MCF 10A (cell line): ENCODE measurements at regions of chr11 and their contacts with region 1.

Region 1: DNA sequence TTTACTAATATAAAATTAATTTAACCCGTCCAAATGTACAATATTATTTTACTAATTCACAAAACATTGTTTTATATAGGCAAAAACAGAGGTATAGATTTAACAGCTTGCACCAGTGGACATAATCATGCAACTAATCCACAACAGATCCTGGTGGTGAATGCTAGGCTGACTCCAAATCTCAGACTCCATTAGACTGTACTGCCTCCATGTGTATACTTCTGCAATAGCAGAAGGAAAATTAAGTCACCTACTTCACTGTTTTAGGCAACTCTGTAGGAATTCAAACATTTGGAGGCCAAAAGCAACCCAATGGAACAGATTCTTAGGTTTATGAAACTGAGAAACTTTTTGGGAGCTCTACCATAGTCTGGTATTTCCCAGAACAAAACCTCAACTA is 30.0 kb upstream of the RAB39A start:
- DNase-seq: peak; percentile 60
- H3K4me3 Mint-ChIP-seq: no peak overlapping the region
- H3K27ac Mint-ChIP-seq: no peak overlapping the region
- H3K4me1 Mint-ChIP-seq: peaks cover 3% of the 10 kb centered on the region
- H3K27me3 Mint-ChIP-seq: peaks cover 22% of the 10 kb centered on the region
- CTCF ChIP-seq: peak; percentile 69

Region 2: DNA sequence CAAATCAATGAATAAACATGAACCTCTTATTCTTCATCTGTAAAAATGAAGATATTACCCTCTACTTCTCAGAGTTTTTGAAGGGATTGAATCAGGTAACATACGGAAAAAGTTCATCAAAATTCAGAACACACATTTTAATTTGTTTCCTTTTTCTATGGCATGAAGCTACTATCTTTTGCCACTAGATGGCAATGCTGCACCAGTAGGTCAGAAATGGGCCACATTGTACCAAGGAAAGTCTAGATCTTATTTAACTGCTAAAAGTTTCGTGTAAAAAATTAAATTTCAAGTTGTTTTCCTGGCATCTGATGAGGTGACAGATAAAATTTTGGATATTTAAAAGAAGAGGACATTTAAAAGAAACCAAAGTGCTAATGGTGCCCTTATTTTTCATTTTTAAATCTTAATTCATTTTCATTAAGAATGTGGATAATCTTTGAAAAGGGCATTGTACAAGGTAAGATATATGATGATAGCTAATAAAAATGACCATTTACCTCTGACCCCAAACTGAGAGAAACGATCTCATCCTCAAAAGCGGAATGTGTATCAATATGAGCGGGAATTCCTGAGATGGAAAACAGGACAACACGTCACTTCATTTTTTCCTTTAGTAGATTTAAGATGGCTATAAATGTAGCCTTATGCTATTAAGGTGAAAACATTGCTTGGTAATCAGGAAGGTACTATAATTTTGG is 348.9 kb before region 1 on chr11:
- CTCF ChIA-PET with region 1: no interaction called
- POLR2A ChIA-PET with region 1: no interaction called
- intact Hi-C with region 1: loop called (anchors 5 kb)
- DNase-seq: peak; percentile 63
- H3K4me3 Mint-ChIP-seq: no peak overlapping the region
- H3K27ac Mint-ChIP-seq: no peak overlapping the region
- H3K4me1 Mint-ChIP-seq: peaks cover 13% of the 10 kb centered on the region
- H3K27me3 Mint-ChIP-seq: no peaks in the 10 kb centered on the region
- CTCF ChIP-seq: peak; percentile 67

Region 3: DNA sequence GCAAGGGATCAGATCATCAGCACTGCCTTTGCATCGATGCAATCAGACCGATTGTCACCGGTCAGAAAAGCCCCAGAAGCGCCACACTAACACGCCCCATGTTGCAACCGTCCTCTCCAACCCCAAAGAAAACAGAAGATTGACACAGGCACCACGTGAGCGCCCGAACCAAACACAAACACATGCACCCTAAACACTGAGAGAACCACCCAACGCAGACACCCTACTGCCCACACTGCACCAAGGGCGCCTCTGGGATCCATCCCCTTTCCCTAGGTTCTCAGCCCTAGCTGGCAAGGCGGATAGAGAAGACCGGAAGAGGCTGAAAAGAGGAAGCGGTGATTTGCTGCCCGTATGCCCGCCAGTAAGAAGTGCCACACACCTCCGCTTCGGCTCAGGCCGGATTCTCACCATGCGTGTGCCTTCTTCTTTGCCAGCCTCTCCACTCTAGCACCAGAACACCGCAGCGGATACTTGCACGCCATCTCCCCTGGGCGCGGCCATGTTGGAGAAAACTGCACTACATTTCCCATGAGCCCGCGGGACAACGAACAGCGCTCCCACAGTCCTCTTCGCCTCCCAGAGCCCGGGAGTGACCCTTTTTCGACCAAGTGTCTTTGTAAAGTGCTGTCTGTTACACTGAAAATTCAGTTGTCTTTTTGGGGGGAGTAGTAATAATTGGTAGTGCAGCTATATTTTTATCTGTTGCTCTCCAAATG is 332.9 kb before region 1 on chr11 and contains the start of gene ALKBH8:
- CTCF ChIA-PET with region 1: interaction called, 6 read pairs
- POLR2A ChIA-PET with region 1: no interaction called
- intact Hi-C with region 1: loop called (anchors 5 kb)
- DNase-seq: peak; percentile 72
- H3K4me3 Mint-ChIP-seq: peak within 1 kb of the TSS; percentile 83
- H3K27ac Mint-ChIP-seq: peak within 1 kb of the TSS; percentile 82
- H3K4me1 Mint-ChIP-seq: peaks cover 23% of the 10 kb centered on the region
- H3K27me3 Mint-ChIP-seq: no peaks in the 10 kb centered on the region
- CTCF ChIP-seq: no peak
- total RNA-seq, gene ALKBH8: 5.1 and 7.3 TPM in 2 replicates

Region 4: DNA sequence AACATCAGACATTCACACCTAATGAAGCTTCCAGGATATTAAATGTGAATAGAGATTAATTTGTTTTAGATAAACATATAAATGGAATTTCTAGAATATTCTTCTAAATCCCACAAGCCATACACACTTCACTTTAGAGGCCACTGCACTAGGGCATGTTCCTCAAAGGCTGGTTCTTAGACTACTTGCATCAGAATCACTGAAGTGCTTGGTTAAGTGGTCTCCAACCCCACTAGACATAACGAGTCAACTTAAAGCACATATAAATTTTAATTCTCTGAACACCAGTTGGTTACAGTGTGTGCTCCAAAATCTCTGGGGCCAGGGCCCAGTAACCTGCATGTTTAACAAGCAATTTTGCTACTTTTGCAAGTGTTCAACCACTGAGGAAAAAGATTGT is 324.8 kb before region 1 on chr11:
- CTCF ChIA-PET with region 1: interaction called, 4 read pairs
- POLR2A ChIA-PET with region 1: no interaction called
- intact Hi-C with region 1: loop called (anchors 5 kb)
- DNase-seq: no peak
- H3K4me3 Mint-ChIP-seq: no peak overlapping the region
- H3K27ac Mint-ChIP-seq: no peak overlapping the region
- H3K4me1 Mint-ChIP-seq: no peaks in the 10 kb centered on the region
- H3K27me3 Mint-ChIP-seq: peaks cover 15% of the 10 kb centered on the region
- CTCF ChIP-seq: no peak

Region 5: DNA sequence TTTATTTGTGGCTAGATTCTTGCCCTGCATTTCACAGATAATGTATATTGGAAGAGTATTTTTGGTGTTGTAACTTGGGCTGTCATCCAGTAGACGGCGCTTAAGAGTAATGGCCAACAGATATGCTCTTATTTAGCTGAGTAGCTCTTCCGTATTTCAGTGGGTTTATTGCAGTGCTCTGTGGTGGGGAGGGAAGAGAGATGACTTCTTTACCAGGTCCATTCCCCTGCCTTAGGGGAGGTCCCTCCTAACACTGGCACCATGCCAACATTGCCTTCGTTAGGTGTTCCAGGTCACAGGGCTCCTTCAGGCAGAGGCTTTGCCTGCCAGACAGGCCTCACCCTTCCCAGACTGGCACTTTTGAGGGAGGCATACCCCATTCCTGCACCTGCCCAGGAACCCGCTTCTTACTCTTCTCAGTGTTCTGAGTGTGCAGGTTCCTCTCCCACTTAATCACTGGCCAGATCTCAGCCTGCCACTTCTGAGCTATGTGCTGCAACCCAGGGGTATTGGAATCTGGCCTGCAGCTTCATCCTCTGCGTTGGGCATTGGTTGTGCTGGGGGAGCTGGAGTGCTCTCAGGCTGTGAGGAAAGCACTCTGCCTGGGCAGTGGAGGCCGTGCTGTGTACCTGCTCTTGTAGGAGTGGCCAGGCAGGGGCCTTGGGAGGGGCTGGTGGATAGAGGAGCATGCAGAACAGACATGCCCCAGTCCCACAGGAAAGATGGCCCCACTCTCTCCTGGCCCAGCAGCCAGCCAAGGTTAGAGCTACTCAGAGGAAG is 157.0 kb before region 1 on chr11:
- CTCF ChIA-PET with region 1: interaction called, 3 read pairs
- POLR2A ChIA-PET with region 1: no interaction called
- intact Hi-C with region 1: loop called (anchors 1 kb)
- DNase-seq: peak; percentile 63
- H3K4me3 Mint-ChIP-seq: no peak overlapping the region
- H3K27ac Mint-ChIP-seq: no peak overlapping the region
- H3K4me1 Mint-ChIP-seq: no peaks in the 10 kb centered on the region
- H3K27me3 Mint-ChIP-seq: peaks cover 78% of the 10 kb centered on the region
- CTCF ChIP-seq: peak; percentile 61

Region 6: GRCh38 chr11:107799218-107799859 is 98.9 kb before region 1 on chr11:
- CTCF ChIA-PET with region 1: no interaction called
- POLR2A ChIA-PET with region 1: no interaction called
- intact Hi-C with region 1: loop called (anchors 2 kb)
- DNase-seq: peak; percentile 67
- H3K4me3 Mint-ChIP-seq: no peak overlapping the region
- H3K27ac Mint-ChIP-seq: no peak overlapping the region
- H3K4me1 Mint-ChIP-seq: no peaks in the 10 kb centered on the region
- H3K27me3 Mint-ChIP-seq: no peaks in the 10 kb centered on the region
- CTCF ChIP-seq: peak; percentile 91

Region 7: DNA sequence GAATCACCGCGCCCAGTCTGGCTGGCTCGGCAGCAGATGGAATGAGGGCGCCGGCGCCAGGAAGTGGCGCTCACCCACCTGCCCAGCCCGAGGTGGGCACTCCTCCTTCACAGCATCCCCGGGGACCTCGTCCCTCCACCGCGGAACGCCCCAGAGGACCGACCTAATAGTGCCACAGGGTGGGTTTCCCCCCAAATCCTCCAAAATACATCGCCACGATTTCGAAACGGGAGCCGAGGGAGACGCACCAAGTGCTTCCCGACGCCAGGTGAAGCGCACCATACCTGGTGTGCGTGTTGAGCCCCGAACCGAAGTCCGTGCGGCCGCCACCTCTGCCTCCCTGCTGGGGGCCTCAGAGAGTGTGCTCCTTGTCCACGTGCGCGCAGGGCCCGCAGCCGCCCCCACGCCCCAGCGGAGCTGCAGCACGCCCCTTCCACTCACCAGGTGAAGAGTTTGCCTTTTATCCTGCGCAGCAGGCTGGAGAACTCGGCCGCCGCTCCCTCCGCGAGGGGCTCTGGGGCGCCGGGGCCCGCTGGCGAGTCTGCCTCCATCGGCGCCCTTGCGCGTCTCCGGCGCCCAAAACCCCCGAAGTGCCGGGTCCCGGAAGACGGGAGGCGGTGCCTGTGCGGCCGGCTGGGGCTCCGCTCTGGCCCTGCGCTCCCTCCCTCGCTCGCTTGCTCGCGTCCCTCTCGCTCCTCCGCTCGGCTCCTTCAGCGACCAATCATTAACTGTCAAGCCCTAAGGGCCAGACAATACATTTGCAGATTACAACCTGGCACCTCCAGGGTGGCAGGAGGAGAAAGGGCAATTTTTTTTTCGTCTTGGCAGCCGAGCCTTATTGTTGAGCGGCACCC is 39.8 kb before region 1 on chr11 and contains the start of gene SLC35F2:
- CTCF ChIA-PET with region 1: interaction called, 5 read pairs
- POLR2A ChIA-PET with region 1: interaction called, 6 read pairs
- intact Hi-C with region 1: loop called (anchors 1 kb)
- DNase-seq: peak; percentile 88
- H3K4me3 Mint-ChIP-seq: peak within 1 kb of the TSS; percentile 91
- H3K27ac Mint-ChIP-seq: peak within 1 kb of the TSS; percentile 85
- H3K4me1 Mint-ChIP-seq: peaks cover 21% of the 10 kb centered on the region
- H3K27me3 Mint-ChIP-seq: no peaks in the 10 kb centered on the region
- CTCF ChIP-seq: no peak
- total RNA-seq, gene SLC35F2: 40.3 and 62.4 TPM in 2 replicates